ENCODE measurements at regions of chr2 and their contacts with region 1.

Region 1: DNA sequence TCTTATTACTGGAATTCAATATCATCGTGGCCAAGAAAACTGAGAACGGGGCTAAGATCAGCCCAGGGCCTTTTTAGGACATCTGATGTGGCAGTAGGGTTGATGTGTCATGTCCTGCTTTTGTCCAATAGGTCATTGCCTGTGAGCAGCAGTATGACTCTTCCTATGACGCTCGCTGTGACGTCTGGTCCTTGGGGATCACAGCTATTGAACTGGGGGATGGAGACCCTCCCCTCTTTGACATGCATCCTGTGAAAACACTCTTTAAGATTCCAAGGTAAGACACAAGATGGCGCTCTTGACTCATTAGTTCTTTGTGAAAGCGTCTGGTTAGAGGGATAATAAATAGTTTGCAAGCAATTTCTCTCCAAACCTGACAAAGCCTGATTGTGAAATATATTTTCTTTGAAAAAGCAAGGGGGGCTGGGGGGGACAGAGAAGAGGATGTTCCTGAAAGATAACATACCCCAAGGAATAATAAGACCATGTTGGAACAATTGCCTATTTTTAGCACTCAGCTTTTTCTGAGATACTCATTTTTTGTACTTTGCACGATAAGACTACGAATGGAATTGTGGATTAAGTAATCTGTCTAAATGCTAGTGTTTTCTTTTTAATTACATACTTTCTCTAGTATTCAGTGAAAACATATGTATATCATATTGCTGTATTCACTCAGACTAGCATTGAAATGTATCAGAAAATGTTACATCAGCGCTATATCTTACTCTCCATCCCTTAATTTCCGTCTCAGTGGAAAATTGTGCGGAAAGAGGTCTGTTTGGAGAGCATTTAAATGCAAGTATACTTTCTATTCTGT is 58.1 kb downstream of the MYO3B start:
- DNase-seq: peak in 1 of 2 donors; percentile 35
- ATAC-seq: peak in 1 of 3 donors; percentile 45
- H3K4me3 ChIP-seq: no peak overlapping the region
- H3K4me3 Mint-ChIP-seq: no peak overlapping the region
- H3K27ac ChIP-seq: no peak overlapping the region
- H3K27ac Mint-ChIP-seq: no peak overlapping the region
- H3K4me1 ChIP-seq: no peaks in the 10 kb centered on the region
- H3K4me1 Mint-ChIP-seq: no peaks in the 10 kb centered on the region
- H3K27me3 ChIP-seq: no peaks in the 10 kb centered on the region
- H3K27me3 Mint-ChIP-seq: peaks cover 17 to 21% of the 10 kb centered on the region in 2 donors
- CTCF ChIP-seq: peak; percentile 43

Region 2: GRCh38 chr2:170170281-170171040 is 65.6 kb before region 1 on chr2:
- intact Hi-C with region 1: no loop called
- DNase-seq: no peak
- ATAC-seq: no peak
- H3K4me3 ChIP-seq: no peak overlapping the region
- H3K4me3 Mint-ChIP-seq: no peak overlapping the region
- H3K27ac ChIP-seq: no peak overlapping the region
- H3K27ac Mint-ChIP-seq: no peak overlapping the region
- H3K4me1 ChIP-seq: no peaks in the 10 kb centered on the region
- H3K4me1 Mint-ChIP-seq: no peaks in the 10 kb centered on the region
- H3K27me3 ChIP-seq: no peaks in the 10 kb centered on the region
- H3K27me3 Mint-ChIP-seq: peaks cover 0 to 7% of the 10 kb centered on the region in 2 donors
- CTCF ChIP-seq: no peak

Region 3: DNA sequence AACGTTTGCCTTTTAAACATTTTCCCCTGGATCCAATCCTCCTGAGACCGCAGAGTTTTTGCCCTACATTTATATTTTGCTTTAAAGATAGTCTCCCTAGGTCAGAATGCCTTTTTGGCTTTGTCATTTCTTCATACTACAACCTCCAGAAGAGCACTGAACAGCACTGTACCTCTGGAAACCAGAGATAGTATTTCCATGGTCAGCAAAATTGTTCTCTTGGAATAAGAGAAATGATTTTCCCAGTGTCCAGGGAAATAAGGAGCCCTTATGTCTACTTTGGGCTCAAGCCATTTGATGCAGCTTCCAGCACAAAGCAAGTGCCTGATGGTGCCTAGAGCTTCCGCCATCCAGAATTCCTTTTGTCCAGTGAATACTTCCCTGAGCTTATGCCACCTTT is 403.6 kb after region 1 on chr2:
- intact Hi-C with region 1: loop called (anchors 5 kb)
- DNase-seq: no peak
- ATAC-seq: no peak
- H3K4me3 ChIP-seq: no peak overlapping the region
- H3K4me3 Mint-ChIP-seq: no peak overlapping the region
- H3K27ac ChIP-seq: no peak overlapping the region
- H3K27ac Mint-ChIP-seq: no peak overlapping the region
- H3K4me1 ChIP-seq: no peaks in the 10 kb centered on the region
- H3K4me1 Mint-ChIP-seq: no peaks in the 10 kb centered on the region
- H3K27me3 ChIP-seq: no peaks in the 10 kb centered on the region
- H3K27me3 Mint-ChIP-seq: peaks cover 0 to 6% of the 10 kb centered on the region in 2 donors
- CTCF ChIP-seq: no peak